Posterior vena cava (tissue), 2 donors: ENCODE measurements at regions of chr7 and their contacts with region 1.

Region 1: DNA sequence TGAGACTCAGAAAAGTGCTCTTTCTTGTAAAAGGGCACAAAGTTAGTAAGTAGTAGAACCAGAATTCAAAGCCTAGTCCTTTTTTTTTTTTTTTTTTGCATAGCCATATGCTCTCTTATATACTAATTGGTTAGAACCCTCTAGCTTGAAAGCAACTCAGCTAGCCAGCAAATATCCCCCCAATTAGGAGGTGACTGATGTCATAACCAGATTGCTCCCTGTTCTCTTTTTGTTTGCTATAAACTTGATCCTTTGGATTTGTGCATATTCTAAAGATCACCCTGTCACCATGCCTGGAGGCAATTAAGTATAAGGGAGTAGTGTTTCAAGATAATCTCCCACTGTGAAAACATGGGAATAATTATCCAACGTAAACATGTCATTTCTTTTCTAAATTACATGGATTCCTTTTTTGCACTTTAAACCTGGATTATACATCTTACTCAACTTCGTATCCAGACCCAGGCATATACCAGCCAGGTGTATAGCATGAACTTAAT is 963.4 kb downstream of the CNTNAP2 start:
- DNase-seq: no peak

Region 2: DNA sequence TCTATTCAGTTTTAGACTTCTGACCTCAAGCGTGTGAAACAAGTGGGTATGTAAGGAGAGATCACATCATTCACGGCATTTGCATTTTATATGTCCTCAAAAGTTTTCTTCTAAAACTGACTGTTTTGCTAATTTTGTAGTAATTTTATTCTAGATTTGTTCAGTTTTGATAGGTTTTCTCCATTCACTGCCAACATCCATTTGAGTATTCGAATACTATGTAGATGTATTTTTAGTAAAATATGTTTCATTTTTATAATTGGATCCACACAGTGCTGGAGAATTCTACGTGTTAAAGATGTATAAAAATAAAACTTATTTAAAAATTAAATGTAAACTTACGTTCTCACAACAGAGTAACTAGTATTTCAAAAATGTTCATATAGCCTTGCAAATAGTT is 460.3 kb before region 1 on chr7:
- intact Hi-C with region 1: no loop called
- DNase-seq: no peak

Region 3: GRCh38 chr7:147053746-147054145 is 26.2 kb before region 1 on chr7:
- intact Hi-C with region 1: no loop called
- DNase-seq: no peak

Region 4: GRCh38 chr7:147120977-147121376 is 41.0 kb after region 1 on chr7:
- intact Hi-C with region 1: loop called in 1 of 2 experiments (anchors 1 kb)
- DNase-seq: no peak

Region 5: DNA sequence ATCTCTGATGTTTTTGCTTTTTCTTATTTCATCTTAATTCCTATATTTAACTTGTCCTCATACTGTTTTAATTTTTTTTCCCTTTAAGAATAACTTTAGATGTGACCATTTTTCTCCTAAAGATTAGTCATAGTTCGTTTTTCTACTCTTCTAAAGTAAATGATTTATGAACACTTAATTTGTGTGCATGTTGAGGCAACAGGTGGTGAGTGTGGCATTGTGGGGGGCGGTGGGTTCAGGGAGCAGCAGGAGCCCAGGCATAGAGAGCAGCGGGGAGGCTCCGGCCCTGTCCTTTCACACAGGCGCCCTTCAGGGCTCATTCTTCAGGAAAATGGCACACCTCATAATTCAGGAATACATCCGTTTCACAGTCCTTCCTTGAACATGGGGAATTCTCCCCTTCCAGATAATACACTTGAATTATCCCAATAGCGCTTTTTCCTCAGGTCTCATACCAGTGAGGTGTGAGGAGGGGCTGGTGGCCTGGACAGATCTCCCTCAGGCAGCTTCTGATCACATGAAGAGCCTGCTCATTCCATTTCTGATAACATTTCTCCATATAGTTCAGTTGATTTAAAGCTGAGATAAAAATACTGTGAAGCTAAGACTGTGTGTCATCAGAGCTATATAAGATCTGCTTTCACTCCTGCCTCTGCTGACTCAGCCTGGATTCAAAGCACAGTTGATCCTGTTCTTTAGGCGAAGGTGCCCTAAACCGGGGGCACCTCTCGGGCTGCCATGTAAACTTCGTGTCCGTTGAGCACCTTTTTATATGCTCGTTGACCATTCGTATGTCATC is 1659.0 kb after region 1 on chr7:
- intact Hi-C with region 1: no loop called
- DNase-seq: no peak